PC-3 (cell line): ENCODE measurements at regions of chr2 and their contacts with region 1.

Region 1: DNA sequence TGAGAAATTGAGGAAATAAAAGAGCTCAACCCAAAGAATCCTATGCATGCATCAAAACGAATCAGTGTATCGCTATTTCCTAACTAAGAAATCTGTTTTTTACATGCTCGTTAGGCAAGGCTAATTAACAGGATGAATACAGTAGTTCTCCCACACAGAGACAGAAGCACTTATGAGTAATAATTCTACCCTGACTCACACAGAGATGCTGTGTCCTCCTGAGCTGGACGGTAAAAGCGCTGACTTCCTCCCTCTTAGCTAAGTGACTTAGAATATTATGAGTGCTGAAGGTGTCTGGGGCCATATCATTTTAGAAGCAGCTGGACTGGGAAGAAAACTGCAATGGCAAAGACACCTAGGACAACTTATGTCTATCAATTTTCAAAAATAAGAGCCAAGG is 18.5 kb downstream of the PLEKHM3 start:
- DNase-seq: no peak
- ATAC-seq: peak; percentile 54; the same call in 1 of the 2 replicates
- H3K4me3 ChIP-seq: no peak overlapping the region
- H3K27ac ChIP-seq: no peak overlapping the region
- H3K4me1 ChIP-seq: no peaks in the 10 kb centered on the region
- H3K27me3 ChIP-seq: no peaks in the 10 kb centered on the region
- CTCF ChIP-seq: no peak

Region 2: DNA sequence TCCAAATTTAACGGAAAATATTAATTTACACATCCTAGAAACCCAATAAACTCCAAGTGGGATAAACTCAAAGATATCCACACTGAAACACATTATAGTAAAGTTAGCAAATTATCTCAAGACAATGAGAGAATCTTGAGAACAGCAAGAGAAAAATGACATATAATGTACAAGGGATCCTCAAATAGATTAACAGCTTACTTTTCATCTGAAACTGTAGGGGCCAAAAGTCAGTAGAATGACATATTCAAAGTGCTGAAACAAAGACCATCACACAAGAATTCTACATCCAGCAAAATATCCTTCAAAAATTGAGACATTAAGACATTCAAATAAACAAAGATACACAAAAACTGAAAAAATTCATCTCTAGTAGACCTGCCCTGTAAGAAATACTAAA is 362.9 kb before region 1 on chr2:
- CTCF ChIA-PET with region 1: no interaction called
- POLR2A ChIA-PET with region 1: no interaction called
- intact Hi-C with region 1: no loop called
- DNase-seq: no peak
- ATAC-seq: no peak
- H3K4me3 ChIP-seq: no peak overlapping the region
- H3K27ac ChIP-seq: no peak overlapping the region
- H3K4me1 ChIP-seq: no peaks in the 10 kb centered on the region
- H3K27me3 ChIP-seq: no peaks in the 10 kb centered on the region
- CTCF ChIP-seq: no peak

Region 3: GRCh38 chr2:207913772-207914358 is 93.0 kb before region 1 on chr2:
- CTCF ChIA-PET with region 1: no interaction called
- POLR2A ChIA-PET with region 1: interaction called, 12 read pairs
- intact Hi-C with region 1: no loop called
- DNase-seq: no peak
- ATAC-seq: no peak
- H3K4me3 ChIP-seq: no peak overlapping the region
- H3K27ac ChIP-seq: no peak overlapping the region
- H3K4me1 ChIP-seq: no peaks in the 10 kb centered on the region
- H3K27me3 ChIP-seq: no peaks in the 10 kb centered on the region
- CTCF ChIP-seq: no peak